ENCODE measurements at regions of chr3 and their contacts with region 1.

Region 1: DNA sequence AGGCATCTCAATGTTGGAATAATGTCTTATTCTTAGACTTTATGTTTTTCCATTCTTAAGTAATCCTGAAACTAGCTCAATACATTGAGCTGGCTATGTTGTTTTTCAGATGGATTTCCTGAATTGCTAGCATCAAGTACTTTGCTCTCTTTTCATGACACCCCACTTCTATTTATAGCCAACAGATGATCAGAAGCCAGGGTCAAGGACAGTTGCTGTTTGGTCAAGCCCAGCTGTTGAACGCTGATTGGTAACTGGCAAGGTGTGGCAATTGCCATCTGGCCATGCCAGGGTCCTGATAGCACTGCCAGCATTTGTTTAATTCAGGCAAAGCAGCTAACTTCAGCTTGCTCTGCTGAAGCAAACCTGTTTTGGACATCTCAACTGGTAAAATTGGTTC is 46.2 kb upstream of the PLCL2 start:
- DNase-seq: no peak
- ATAC-seq: peak; percentile 47 to 76

Region 2: GRCh38 chr3:16741103-16741758 is 97.3 kb before region 1 on chr3:
- intact Hi-C with region 1: no loop called
- DNase-seq: no peak
- ATAC-seq: peak in 1 of 2 donors; percentile 85

Region 3: DNA sequence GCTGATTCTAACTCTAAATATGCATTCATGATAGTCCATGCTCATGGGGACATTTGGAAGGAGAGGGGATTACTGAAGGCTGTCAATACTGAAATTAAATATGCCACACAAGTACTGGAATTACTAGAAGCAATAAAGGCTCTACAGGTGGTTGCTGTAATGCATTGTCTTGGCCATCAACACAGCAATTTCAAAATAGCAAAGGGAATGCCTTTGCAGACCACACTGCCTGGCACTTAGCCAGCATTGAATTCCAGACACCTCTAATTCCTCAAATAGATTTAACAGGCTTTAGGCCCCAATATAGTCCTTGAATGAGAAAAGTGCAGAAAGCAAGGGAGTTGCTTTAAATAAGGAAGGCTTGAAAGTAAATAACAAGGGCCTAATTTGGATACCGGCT is 69.6 kb before region 1 on chr3:
- intact Hi-C with region 1: no loop called
- DNase-seq: no peak
- ATAC-seq: peak; percentile 31 to 56

Region 4: GRCh38 chr3:16945330-16945729 is 106.8 kb after region 1 on chr3:
- intact Hi-C with region 1: loop called in 1 of 2 experiments (anchors 10 kb)
- DNase-seq: no peak
- ATAC-seq: no peak